Activated CD8-positive, alpha-beta T cell treated with anti-CD3 and anti-CD28 coated beads for 36 hours (primary cell): ENCODE measurements at regions of chr10 and their contacts with region 1.

Region 1: DNA sequence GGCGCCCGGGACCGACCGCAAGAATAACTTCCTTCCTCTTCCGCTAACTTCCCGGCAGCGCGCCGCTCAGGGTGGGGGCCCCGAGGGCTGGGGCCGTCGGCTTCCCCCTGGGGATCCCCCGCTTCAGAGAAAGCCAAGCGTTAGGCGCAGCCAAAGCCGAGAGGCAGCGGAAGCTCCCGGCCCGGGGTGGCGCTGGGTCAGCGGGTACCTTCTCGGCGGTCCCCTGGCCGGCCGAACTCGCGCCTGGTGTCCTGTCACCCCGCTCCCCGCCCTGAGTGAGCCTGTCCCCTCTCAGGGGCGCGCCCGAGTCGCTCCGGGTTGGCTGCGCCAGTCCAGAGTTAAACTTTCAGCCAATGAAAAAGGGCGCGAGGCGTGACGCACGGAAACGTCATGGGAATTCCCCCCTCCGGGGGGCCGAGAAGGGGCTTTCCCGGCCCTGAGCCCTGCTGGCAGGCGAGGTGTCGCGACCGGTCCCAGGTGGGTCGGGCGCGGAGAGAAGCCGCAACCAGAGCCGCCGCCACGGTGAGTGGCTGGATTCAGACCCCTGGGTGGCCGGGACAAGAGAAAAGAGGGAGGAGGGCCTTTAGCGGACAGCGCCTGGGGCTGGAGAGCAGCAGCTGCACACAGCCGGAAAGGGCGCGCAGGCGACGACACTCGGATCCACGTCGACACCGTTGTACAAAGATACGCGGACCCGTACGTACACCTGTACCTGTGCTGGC is 1.3 kb upstream of the NFKB2 start:
- DNase-seq: peak; percentile 98
- ATAC-seq: peak; percentile 85
- H3K4me3 Mint-ChIP-seq: peak overlapping the region; percentile 93
- H3K27ac Mint-ChIP-seq: peak overlapping the region; percentile 98
- H3K4me1 Mint-ChIP-seq: peaks cover 44% of the 10 kb centered on the region
- H3K27me3 Mint-ChIP-seq: no peaks in the 10 kb centered on the region
- CTCF ChIP-seq: no peak

Region 2: DNA sequence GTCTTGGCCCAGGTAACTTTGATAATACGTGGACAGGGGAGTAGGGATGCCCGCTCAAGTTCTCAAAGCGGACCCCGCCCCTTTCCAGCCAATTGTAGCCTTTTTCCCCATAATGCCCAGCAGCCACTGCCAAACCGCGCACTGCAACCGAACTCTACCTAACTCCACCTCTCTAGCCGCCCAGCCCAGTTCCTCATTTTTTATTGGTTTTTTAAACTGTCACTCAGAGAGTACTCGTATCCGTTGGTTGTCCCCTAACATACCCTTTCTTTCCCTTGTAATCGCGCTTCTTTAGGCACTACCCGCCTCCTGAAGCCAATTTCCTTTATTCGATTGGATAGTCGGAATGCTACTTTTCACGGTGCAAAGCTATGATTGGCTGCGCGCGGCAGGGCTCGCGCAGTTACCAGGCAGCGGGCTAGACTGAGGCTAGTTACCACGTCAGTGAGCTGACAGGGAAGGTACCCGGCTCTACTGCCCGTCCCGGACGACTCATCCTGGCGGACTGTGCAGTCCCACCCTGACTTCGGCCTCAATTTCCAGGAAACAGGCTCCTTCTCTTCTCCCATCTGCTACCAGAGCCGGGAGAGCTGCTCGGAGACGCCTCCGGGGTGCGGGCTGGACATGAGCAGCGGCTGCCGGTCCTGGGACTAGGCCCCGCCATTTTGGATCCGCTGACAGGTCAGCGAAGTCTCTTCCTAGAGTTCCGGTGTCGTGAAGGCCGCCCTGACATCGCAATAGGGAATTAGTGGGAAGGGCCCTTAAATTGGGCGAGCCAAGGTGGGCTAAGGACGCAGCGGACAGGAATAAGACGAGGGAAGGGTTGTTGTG is 148.9 kb before region 1 on chr10 and contains the start of gene GBF1:
- CTCF ChIA-PET with region 1: interaction called, 4 read pairs
- POLR2A ChIA-PET with region 1: interaction called, 3 read pairs
- intact Hi-C with region 1: loop called (anchors 2 kb)
- DNase-seq: peak; percentile 95
- ATAC-seq: peak; percentile 91
- H3K4me3 Mint-ChIP-seq: peak within 1 kb of the TSS; percentile 98
- H3K27ac Mint-ChIP-seq: peak within 1 kb of the TSS; percentile 94
- H3K4me1 Mint-ChIP-seq: peaks cover 46% of the 10 kb centered on the region
- H3K27me3 Mint-ChIP-seq: peaks cover 23% of the 10 kb centered on the region
- CTCF ChIP-seq: no peak
- total RNA-seq, gene GBF1: 25.4 to 28.2 TPM

Region 3: DNA sequence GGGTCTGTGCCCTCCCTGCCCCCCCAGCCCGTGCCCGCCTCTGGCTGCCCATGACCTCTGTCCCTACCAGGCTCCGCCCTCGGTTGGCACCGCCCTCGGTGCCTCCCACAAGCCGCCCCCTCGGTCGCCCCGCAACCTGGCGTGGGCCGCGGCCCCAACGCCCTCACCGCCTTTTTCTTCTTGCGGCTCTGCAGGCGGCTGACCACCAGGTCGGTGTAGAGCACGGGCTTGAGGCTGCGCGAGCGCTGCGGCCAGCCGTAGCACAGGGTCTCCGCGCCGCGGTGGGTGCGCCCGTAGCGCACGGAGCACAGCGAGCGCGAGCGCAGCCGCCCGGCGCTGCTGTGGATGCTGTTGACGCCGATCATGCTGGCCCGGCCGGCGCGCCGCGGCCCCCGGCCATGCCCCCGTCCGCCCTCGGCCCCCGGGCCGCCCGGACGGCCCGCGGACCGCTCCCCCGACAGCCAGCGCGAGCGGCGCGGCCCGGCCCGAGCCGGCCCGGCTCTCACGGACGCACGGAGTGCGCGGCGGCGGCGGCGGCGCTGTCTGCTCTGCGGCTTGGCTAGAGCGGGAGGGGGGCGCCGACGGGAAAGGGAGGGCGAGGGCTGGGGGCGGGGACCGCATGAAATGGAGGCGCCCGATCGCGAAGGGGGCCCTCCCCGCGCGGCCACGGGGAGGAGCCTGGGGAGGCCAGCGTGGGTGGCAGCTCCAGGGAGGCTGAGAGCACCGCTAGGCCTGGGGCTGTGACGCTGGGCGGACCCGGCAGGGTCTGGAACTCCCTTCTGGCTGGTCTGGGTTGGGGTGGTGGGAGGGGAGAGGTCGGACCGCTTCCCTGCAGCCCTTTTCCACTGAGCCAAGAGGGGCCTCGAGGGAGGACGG is 14.7 kb after region 1 on chr10:
- CTCF ChIA-PET with region 1: interaction called, 57 read pairs
- POLR2A ChIA-PET with region 1: interaction called, 107 read pairs
- intact Hi-C with region 1: no loop called
- DNase-seq: peak; percentile 91
- ATAC-seq: peak; percentile 73
- H3K4me3 Mint-ChIP-seq: peak overlapping the region; percentile 80
- H3K27ac Mint-ChIP-seq: peak overlapping the region; percentile 62
- H3K4me1 Mint-ChIP-seq: peaks cover 42% of the 10 kb centered on the region
- H3K27me3 Mint-ChIP-seq: peaks cover 7% of the 10 kb centered on the region
- CTCF ChIP-seq: no peak

Region 4: DNA sequence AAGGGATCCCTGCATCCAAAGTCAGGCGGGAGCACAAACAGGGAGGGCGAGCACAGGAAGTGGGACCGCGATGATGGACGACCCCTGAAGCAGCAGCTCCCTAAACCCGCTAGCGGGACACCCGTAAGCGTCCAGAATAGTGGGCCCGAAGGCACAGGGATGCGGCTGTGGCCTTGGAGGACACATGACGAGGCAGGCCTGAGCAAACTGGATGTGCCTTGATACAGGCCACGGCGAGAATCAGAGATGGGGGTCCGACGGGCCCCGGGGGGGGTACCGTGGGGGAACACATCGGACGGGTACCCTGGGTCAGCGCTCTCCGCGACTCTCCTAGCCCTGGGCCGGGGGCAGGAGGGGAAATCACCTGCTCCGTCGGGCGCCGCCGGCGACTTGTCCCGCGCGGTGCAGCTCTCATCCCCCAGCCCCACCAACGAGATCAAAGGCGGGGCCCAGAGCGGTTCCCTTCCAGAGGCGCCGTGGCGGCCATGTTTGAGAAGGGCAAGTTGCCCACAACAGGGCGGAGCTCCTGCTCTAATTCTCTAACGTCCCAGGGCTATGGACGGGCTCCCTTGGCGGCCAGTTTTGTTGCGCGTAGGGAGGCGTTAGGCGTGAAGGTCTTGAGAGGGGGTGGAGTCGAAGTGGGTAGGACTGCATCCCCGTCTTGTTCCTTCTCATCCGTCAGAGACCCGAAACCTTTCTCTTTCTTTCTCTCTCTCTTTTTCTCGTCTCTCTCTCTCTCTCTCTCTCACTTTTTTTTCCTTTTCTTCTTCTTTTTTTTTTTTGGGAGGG is 38.1 kb after region 1 on chr10 and contains the start of gene CUEDC2:
- CTCF ChIA-PET with region 1: interaction called, 9 read pairs
- POLR2A ChIA-PET with region 1: interaction called, 16 read pairs
- intact Hi-C with region 1: no loop called
- DNase-seq: peak; percentile 98
- ATAC-seq: peak; percentile 93
- H3K4me3 Mint-ChIP-seq: peak within 1 kb of the TSS; percentile 95
- H3K27ac Mint-ChIP-seq: peak within 1 kb of the TSS; percentile 94
- H3K4me1 Mint-ChIP-seq: peaks cover 42% of the 10 kb centered on the region
- H3K27me3 Mint-ChIP-seq: no peaks in the 10 kb centered on the region
- CTCF ChIP-seq: no peak
- total RNA-seq, gene CUEDC2: 71.8 to 76.4 TPM

Region 5: GRCh38 chr10:102461187-102462054 is 67.2 kb after region 1 on chr10:
- CTCF ChIA-PET with region 1: interaction called, 17 read pairs
- POLR2A ChIA-PET with region 1: interaction called, 14 read pairs
- intact Hi-C with region 1: no loop called
- DNase-seq: peak; percentile 95
- ATAC-seq: peak; percentile 96
- H3K4me3 Mint-ChIP-seq: peak overlapping the region; percentile 91
- H3K27ac Mint-ChIP-seq: peak overlapping the region; percentile 80
- H3K4me1 Mint-ChIP-seq: peaks cover 27% of the 10 kb centered on the region
- H3K27me3 Mint-ChIP-seq: no peaks in the 10 kb centered on the region
- CTCF ChIP-seq: no peak

Region 6: DNA sequence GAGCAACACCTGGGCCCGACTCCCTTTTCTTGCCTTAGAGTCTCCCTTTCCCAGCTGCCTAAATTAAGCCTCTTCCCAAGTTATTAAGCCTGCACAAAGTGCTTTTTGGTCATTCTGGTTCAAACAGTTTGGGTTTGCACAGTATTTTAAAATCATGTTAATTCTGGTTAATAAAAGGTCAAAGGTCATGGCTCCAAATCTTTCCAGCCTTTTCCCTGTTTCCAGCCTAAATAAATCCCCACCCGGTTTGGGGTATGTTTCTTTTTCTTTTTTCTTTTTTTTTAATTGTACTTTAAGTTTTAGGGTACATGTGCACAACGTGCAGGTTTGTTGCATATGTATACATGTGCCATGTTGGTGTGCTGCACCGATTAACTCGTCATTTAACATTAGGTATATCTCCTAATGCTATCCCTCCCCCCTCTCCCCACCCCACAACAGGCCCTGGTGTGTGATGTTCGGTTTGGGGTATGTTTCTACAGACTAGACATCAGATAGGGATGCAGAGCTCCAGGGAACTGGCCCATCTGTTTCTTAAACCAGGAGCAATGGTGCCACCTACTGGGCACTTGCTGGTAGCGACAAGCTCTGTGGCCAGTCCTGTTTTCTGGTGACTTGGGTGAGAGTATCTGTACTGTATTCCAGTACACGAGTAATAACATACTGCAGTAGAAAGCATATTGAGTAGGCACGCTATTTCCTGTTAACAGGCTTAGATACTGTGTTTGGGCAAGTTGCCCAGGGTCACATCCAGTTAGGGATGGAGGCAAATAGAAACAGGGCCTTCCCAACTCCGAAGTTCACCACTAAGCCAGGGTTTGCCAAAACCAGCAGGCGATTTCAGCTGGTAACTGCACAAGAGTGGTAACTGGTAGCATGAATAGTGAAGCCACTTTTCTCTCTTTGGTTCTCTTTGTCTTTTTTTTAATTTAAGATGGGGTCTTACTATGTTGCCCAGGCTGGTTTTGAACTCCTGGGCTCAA is 189.5 kb after region 1 on chr10:
- CTCF ChIA-PET with region 1: interaction called, 10 read pairs
- POLR2A ChIA-PET with region 1: interaction called, 3 read pairs
- intact Hi-C with region 1: no loop called
- DNase-seq: peak; percentile 92
- ATAC-seq: peak; percentile 99
- H3K4me3 Mint-ChIP-seq: no peak overlapping the region
- H3K27ac Mint-ChIP-seq: no peak overlapping the region
- H3K4me1 Mint-ChIP-seq: peaks cover 4% of the 10 kb centered on the region
- H3K27me3 Mint-ChIP-seq: no peaks in the 10 kb centered on the region
- CTCF ChIP-seq: peak; percentile 91